T-cell (primary cell): ENCODE measurements at regions of chr4 and their contacts with region 1.

Region 1: DNA sequence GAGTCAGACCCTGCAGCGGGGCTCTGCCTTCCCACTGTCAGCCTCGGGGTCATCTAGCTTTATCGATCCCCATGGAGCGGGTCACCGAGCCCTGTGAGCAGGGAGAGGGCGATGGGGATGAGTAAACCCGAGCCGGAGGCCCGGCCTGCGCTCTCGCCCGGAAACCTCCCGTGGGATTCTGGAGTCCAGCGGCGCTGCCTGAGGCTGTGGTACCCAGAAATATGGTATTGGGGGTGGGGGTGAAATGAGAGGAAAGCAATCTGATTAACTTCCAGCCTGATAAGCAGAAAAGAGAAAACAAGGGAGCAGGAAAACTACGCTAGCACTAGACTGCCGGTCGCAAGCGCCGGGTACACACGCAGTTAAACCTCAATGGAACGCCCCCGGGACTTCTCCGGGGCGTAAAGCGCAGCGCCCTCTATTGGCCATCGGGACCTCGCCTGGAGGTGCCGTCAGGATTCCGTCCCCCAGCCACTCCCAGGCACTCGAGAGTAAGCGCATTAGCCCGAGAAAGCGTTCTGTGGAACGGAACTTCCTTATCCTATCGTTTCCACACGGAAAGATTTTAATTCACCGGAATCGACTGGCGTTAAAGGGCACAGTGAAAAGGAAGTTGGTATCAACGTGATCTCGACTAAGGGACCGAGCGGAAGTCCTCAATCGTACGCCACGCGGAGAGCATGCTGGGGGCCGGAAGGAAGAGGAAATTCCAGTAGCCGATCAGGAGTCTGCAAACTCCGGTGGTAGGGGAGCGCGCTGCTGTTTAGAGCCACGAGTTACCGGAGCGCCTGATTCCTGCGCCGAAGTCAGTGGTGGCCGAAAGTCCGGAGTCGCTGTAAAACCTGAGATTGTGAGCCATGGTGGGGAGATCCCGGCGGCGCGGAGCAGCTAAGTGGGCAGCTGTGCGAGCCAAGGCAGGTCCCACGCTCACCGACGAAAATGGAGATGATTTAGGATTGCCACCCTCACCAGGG is at the start of gene UTP3:
- DNase-seq: peak; percentile 84 to 98 (median 89)
- ATAC-seq: peak; percentile 88 to 94 (median 88)
- H3K4me3 ChIP-seq: peak within 1 kb of the TSS; percentile 88 to 92
- H3K4me3 Mint-ChIP-seq: peak within 1 kb of the TSS; percentile 98 to 99 (median 99)
- H3K27ac ChIP-seq: peak within 1 kb of the TSS; percentile 92
- H3K27ac Mint-ChIP-seq: peak within 1 kb of the TSS; percentile 99
- H3K4me1 ChIP-seq: peaks cover 22 to 26% of the 10 kb centered on the region in 2 experiments
- H3K4me1 Mint-ChIP-seq: peaks cover 39 to 42% (median 40%) of the 10 kb centered on the region in 3 donors
- H3K27me3 ChIP-seq: no peaks in the 10 kb centered on the region
- H3K27me3 Mint-ChIP-seq: no peaks in the 10 kb centered on the region
- total RNA-seq, gene UTP3: 15.1 to 34.9 (median 34.0) TPM

Region 2: DNA sequence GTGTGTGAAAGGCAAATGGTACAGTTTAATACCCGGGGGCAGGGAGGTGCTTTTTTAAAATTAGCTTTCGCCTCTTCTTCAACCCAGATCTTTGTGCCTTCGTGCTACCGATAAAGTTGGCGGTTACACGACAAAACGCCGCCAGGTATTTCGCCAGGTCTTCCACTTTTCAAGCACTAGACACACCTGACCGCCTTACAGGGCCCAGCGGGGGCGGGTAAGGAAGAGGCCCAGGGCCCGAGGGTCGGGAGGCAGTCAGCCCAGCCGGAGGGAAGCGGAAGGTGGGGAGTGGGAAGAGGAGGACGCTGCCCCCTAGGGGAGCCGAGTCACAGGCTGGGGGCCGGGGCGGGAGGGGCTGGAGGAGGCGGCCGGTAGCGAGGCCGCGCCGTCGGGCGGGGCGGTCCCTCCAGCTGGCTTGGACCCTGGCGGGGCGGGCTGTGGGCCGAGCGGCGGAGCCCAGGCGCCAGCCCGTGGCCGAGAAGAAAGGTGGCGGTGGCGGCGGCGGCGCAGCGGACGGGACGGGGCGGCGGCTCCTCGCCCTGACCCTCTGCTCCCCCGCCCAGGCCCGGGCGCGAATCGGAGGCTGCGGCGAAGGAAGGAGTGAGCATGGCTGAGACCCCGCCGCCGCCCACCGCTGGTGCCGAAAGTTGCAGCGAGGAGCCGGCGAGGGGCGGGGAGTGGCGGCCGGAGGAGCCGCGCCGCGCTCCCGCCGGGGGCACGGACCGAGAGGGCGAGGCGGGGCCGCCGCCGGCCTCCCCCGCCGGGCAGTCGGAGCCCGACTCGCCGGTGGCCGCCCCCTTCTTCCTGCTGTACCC is 16.4 kb after region 1 on chr4:
- CTCF ChIA-PET with region 1: interaction called, 15 to 52 read pairs
- POLR2A ChIA-PET with region 1: interaction called, 4 to 11 read pairs
- DNase-seq: peak in 30 of 35 experiments; percentile 8 to 76 (median 38)
- ATAC-seq: peak; percentile 42 to 58 (median 47)
- H3K4me3 ChIP-seq: peak overlapping the region; percentile 55 to 62
- H3K4me3 Mint-ChIP-seq: peak overlapping the region; percentile 88 to 97 (median 93)
- H3K27ac ChIP-seq: peak overlapping the region; percentile 80
- H3K27ac Mint-ChIP-seq: peak overlapping the region; percentile 89 to 94
- H3K4me1 ChIP-seq: peaks cover 17 to 19% of the 10 kb centered on the region in 2 experiments
- H3K4me1 Mint-ChIP-seq: peaks cover 26 to 35% (median 27%) of the 10 kb centered on the region in 3 donors
- H3K27me3 ChIP-seq: no peaks in the 10 kb centered on the region
- H3K27me3 Mint-ChIP-seq: no peaks in the 10 kb centered on the region